Dorsolateral prefrontal cortex (tissue), 120 donors: ENCODE measurements at regions of chr10 and their contacts with region 1.

Region 1: GRCh38 chr10:113385021-113385999 is 167.5 kb upstream of the HABP2 start:
- DNase-seq: peak; percentile 43 to 87 (median 80)
- H3K4me3 ChIP-seq: peak overlapping the region in 16 of 59 donors; percentile 2 to 40 (median 18)
- H3K27ac ChIP-seq: peak overlapping the region in 6 of 59 donors; percentile 11 to 56 (median 22)
- H3K27me3 ChIP-seq: peaks cover 0 to 13% (median 0%) of the 10 kb centered on the region in 45 donors
- CTCF ChIP-seq: peak; percentile 62 to 97 (median 88)

Region 2: GRCh38 chr10:112471878-112472487 is 913.3 kb before region 1 on chr10:
- intact Hi-C with region 1: loop called (anchors 2 to 10 kb)
- DNase-seq: no peak
- H3K4me3 ChIP-seq: no peak overlapping the region
- H3K27ac ChIP-seq: peak overlapping the region in 18 of 59 donors; percentile 3 to 53 (median 32)
- H3K27me3 ChIP-seq: no peaks in the 10 kb centered on the region
- CTCF ChIP-seq: peak; percentile 53 to 85 (median 72)

Region 3: GRCh38 chr10:112565434-112566053 is 819.8 kb before region 1 on chr10:
- intact Hi-C with region 1: loop called in 1 of 2 experiments (anchors 2 kb)
- DNase-seq: peak in 1 of 10 donors; percentile 24
- H3K4me3 ChIP-seq: no peak overlapping the region
- H3K27ac ChIP-seq: no peak overlapping the region
- H3K27me3 ChIP-seq: no peaks in the 10 kb centered on the region
- CTCF ChIP-seq: peak in 55 of 56 donors; percentile 42 to 86 (median 67)

Region 4: DNA sequence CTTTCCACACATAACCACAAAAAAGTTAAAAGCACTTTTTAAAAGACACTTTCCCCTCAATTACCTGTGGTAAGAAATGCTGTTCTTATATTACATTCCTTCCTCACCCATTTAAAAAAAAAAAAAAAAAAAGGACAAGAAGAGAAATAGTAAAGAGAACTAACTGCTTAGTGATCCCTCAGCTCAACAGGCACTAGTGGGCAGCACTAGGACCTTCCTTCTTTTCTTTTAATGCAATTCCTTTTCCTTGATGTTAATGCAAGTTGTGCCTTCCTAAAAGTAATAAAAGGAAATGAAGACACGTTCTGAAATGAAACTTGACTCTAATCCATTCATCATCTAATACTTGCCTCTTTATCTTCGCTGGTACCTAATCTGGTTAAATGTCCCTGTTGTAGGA is 245.6 kb before region 1 on chr10:
- intact Hi-C with region 1: loop called in 1 of 2 experiments (anchors 10 kb)
- DNase-seq: no peak
- H3K4me3 ChIP-seq: no peak overlapping the region
- H3K27ac ChIP-seq: no peak overlapping the region
- H3K27me3 ChIP-seq: no peaks in the 10 kb centered on the region
- CTCF ChIP-seq: peak in 14 of 56 donors; percentile 12 to 35 (median 18)